Activated naive CD4-positive, alpha-beta T cell treated with anti-CD3 and anti-CD28 coated beads for 36 hours (primary cell): ENCODE measurements at regions of chr3 and their contacts with region 1.

Region 1: DNA sequence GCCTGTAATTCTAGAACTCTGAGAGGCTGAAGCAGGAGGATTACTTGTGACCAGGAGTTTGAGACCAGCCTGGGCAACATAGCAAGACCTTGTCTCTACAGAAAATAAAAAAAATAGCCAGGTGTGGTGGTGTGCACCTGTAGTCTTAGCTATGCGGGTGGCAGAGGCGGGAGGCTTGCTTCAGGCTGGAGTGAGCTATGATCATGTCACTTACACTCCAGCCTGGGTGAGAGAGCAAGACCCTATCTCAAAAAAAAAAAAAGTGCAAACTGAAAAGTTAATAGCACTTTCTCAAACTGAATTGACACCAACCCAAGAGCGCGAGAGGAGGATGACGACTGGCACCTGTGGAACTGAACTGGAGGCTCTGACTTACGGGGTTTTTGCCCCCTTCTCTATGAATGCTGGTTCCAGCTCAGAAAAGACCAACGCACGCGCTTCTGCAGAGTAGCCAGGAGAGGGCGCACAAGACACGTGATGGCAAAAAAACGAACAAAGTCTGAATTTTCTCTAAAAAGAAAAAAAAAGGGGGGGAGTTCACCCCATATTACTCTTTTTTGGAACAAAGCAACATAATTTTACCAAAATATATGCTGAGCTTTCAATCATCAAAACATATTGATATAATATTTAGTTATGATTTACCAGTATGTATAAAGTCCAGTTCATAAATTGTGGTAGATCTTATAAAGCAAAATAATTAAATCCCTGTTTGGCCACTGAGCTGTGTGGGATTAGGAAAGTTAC is 23.7 kb downstream of the CFAP92 start:
- DNase-seq: peak; percentile 78
- H3K4me3 Mint-ChIP-seq: no peak overlapping the region
- H3K27ac Mint-ChIP-seq: no peak overlapping the region
- H3K4me1 Mint-ChIP-seq: no peaks in the 10 kb centered on the region
- H3K27me3 Mint-ChIP-seq: no peaks in the 10 kb centered on the region

Region 2: DNA sequence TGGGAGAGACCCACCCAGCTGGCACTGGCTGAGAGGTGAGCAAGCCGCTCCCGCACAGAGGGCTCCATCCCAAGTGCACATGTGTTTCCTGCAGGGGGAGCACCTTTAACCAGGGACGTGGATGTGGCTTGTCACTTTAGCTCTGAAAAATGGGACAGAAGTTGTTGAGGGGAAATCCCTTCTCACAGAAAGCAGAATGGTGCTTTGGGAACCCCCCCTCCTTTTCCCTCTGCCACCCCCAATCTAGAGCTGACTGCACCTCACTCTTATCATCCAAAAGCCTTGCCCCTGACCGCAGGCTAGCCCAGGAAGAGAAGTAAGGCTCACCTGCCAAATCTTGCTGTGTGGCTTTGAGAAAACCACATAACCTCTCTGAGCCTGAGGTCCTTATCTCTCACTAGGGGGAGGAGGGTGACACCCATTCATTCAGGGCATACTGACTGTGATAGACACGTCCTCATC is 397.5 kb before region 1 on chr3:
- CTCF ChIA-PET with region 1: no interaction called
- intact Hi-C with region 1: no loop called
- DNase-seq: peak; percentile 83
- H3K4me3 Mint-ChIP-seq: peak overlapping the region; percentile 13
- H3K27ac Mint-ChIP-seq: peak overlapping the region; percentile 43
- H3K4me1 Mint-ChIP-seq: peaks cover 18% of the 10 kb centered on the region
- H3K27me3 Mint-ChIP-seq: peaks cover 17% of the 10 kb centered on the region

Region 3: GRCh38 chr3:128993461-128994173 is 23.5 kb after region 1 on chr3 and contains the start of gene CFAP92:
- CTCF ChIA-PET with region 1: interaction called, 30 read pairs
- intact Hi-C with region 1: no loop called
- DNase-seq: peak; percentile 95
- H3K4me3 Mint-ChIP-seq: peak within 1 kb of the TSS; percentile 68
- H3K27ac Mint-ChIP-seq: no peak within 1 kb of the TSS
- H3K4me1 Mint-ChIP-seq: peaks cover 25% of the 10 kb centered on the region
- H3K27me3 Mint-ChIP-seq: no peaks in the 10 kb centered on the region
- total RNA-seq, gene CFAP92: 0.32 to 0.48 TPM

Region 4: DNA sequence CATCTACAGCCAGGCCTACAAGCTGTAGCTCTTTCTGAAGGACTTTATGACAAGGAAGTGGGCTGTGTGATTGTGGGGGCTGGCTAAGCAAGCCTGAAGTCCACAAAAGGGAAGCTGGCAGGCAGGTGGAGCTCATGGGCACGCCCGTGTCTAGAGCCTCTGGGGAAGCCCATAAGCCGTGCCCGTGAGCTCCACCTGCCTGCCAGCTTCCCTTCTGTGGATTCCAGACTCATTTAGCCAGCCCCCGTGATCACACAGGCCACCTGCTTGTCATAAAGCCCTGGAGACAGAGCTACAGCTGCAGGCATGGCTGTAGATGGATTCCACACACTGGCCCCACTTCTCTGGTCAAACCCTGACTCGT is 46.2 kb after region 1 on chr3:
- CTCF ChIA-PET with region 1: interaction called, 84 read pairs
- intact Hi-C with region 1: loop called (anchors 1 kb)
- DNase-seq: peak; percentile 88
- H3K4me3 Mint-ChIP-seq: peak overlapping the region; percentile 73
- H3K27ac Mint-ChIP-seq: peak overlapping the region; percentile 95
- H3K4me1 Mint-ChIP-seq: peaks cover 38% of the 10 kb centered on the region
- H3K27me3 Mint-ChIP-seq: no peaks in the 10 kb centered on the region

Region 5: DNA sequence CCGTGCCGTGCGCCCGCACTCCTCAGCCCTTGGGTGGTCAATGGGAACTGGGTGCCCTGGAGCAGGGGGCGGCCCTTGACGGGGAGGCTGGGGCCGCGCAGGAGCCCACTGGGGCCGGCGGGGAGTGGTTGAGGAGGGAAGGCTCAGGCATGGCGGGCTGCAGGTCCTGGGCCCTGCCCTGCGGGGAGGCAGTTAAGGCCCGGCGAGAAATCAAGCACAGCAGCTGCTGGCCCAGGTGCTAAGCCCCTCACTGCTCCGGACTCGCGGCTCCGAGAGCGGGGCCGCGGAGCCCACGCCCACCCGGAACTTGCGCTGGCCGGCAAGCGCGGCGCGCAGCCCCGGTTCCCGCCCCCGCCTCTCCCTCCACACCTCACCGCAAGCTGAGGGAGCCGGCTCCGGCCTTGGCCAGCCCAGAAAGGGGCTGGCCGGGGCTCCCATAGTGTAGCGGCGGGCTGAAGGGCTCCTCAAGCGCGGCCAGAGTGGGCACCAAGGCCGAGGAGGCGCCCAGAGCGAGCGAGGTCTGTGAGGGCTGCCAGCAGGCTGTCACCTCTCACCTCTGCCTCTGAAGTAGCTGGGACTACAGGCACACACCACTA is 98.2 kb after region 1 on chr3:
- CTCF ChIA-PET with region 1: interaction called, 13 read pairs
- intact Hi-C with region 1: no loop called
- DNase-seq: no peak
- H3K4me3 Mint-ChIP-seq: peak overlapping the region; percentile 56
- H3K27ac Mint-ChIP-seq: no peak overlapping the region
- H3K4me1 Mint-ChIP-seq: peaks cover 8% of the 10 kb centered on the region
- H3K27me3 Mint-ChIP-seq: peaks cover 3% of the 10 kb centered on the region

Region 6: GRCh38 chr3:129224984-129225393 is 254.8 kb after region 1 on chr3:
- CTCF ChIA-PET with region 1: interaction called, 17 read pairs
- intact Hi-C with region 1: no loop called
- DNase-seq: peak; percentile 44
- H3K4me3 Mint-ChIP-seq: peak overlapping the region; percentile 36
- H3K27ac Mint-ChIP-seq: peak overlapping the region; percentile 15
- H3K4me1 Mint-ChIP-seq: peaks cover 16% of the 10 kb centered on the region
- H3K27me3 Mint-ChIP-seq: no peaks in the 10 kb centered on the region

Region 7: GRCh38 chr3:129316131-129317013 is 346.2 kb after region 1 on chr3:
- CTCF ChIA-PET with region 1: interaction called, 9 read pairs
- intact Hi-C with region 1: loop called (anchors 2 kb)
- DNase-seq: peak; percentile 87
- H3K4me3 Mint-ChIP-seq: peak overlapping the region; percentile 96
- H3K27ac Mint-ChIP-seq: peak overlapping the region; percentile 85
- H3K4me1 Mint-ChIP-seq: peaks cover 14% of the 10 kb centered on the region
- H3K27me3 Mint-ChIP-seq: no peaks in the 10 kb centered on the region

Region 8: GRCh38 chr3:130596484-130596883 is 1626.3 kb after region 1 on chr3:
- CTCF ChIA-PET with region 1: no interaction called
- intact Hi-C with region 1: no loop called
- DNase-seq: no peak
- H3K4me3 Mint-ChIP-seq: no peak overlapping the region
- H3K27ac Mint-ChIP-seq: no peak overlapping the region
- H3K4me1 Mint-ChIP-seq: no peaks in the 10 kb centered on the region
- H3K27me3 Mint-ChIP-seq: peaks cover 12% of the 10 kb centered on the region